B cell (primary cell): ENCODE measurements at regions of chr16 and their contacts with region 1.

Region 1: GRCh38 chr16:27367461-27368357 is 34.3 kb upstream of the IL21R start:
- DNase-seq: peak; percentile 95
- ATAC-seq: peak; percentile 77
- H3K4me3 ChIP-seq: peak overlapping the region; percentile 11 to 42 (median 30)
- H3K4me3 Mint-ChIP-seq: peak overlapping the region; percentile 78
- H3K27ac ChIP-seq: peak overlapping the region; percentile 97
- H3K27ac Mint-ChIP-seq: peak overlapping the region; percentile 96
- H3K4me1 ChIP-seq: peaks cover 36 to 57% of the 10 kb centered on the region in 2 donors
- H3K4me1 Mint-ChIP-seq: peaks cover 57% of the 10 kb centered on the region
- H3K27me3 ChIP-seq: no peaks in the 10 kb centered on the region
- H3K27me3 Mint-ChIP-seq: no peaks in the 10 kb centered on the region
- CTCF ChIP-seq: peak; percentile 85

Region 2: GRCh38 chr16:27109666-27110523 is 257.8 kb before region 1 on chr16:
- CTCF ChIA-PET with region 1: interaction called, 3 read pairs
- POLR2A ChIA-PET with region 1: no interaction called
- intact Hi-C with region 1: loop called (anchors 1 kb)
- DNase-seq: peak; percentile 80
- ATAC-seq: peak; percentile 73
- H3K4me3 ChIP-seq: peak overlapping the region in 4 of 5 experiments; percentile 24 to 64 (median 45)
- H3K4me3 Mint-ChIP-seq: peak overlapping the region; percentile 75
- H3K27ac ChIP-seq: no peak overlapping the region
- H3K27ac Mint-ChIP-seq: no peak overlapping the region
- H3K4me1 ChIP-seq: peaks cover 36 to 51% of the 10 kb centered on the region in 2 donors
- H3K4me1 Mint-ChIP-seq: peaks cover 41% of the 10 kb centered on the region
- H3K27me3 ChIP-seq: no peaks in the 10 kb centered on the region
- H3K27me3 Mint-ChIP-seq: no peaks in the 10 kb centered on the region
- CTCF ChIP-seq: peak; percentile 99

Region 3: GRCh38 chr16:27203429-27204231 is 164.1 kb before region 1 on chr16 and contains the start of gene KDM8:
- CTCF ChIA-PET with region 1: interaction called, 12 read pairs
- POLR2A ChIA-PET with region 1: interaction called, 6 read pairs
- intact Hi-C with region 1: loop called (anchors 1 kb)
- DNase-seq: peak; percentile 100
- ATAC-seq: peak; percentile 76
- H3K4me3 ChIP-seq: peak within 1 kb of the TSS; percentile 69 to 95 (median 92)
- H3K4me3 Mint-ChIP-seq: peak within 1 kb of the TSS; percentile 97
- H3K27ac ChIP-seq: peak within 1 kb of the TSS; percentile 93 to 94
- H3K27ac Mint-ChIP-seq: peak within 1 kb of the TSS; percentile 100
- H3K4me1 ChIP-seq: peaks cover 50 to 62% of the 10 kb centered on the region in 2 donors
- H3K4me1 Mint-ChIP-seq: peaks cover 67% of the 10 kb centered on the region
- H3K27me3 ChIP-seq: no peaks in the 10 kb centered on the region
- H3K27me3 Mint-ChIP-seq: no peaks in the 10 kb centered on the region
- CTCF ChIP-seq: no peak
- total RNA-seq, gene KDM8: 37.4 and 39.8 TPM in 2 replicates

Region 4: GRCh38 chr16:27304881-27305745 is 62.6 kb before region 1 on chr16:
- CTCF ChIA-PET with region 1: no interaction called
- POLR2A ChIA-PET with region 1: no interaction called
- intact Hi-C with region 1: no loop called
- DNase-seq: no peak
- ATAC-seq: no peak
- H3K4me3 ChIP-seq: no peak overlapping the region
- H3K4me3 Mint-ChIP-seq: no peak overlapping the region
- H3K27ac ChIP-seq: peak overlapping the region in 1 of 2 donors; percentile 74
- H3K27ac Mint-ChIP-seq: peak overlapping the region; percentile 61
- H3K4me1 ChIP-seq: peaks cover 53 to 58% of the 10 kb centered on the region in 2 donors
- H3K4me1 Mint-ChIP-seq: peaks cover 56% of the 10 kb centered on the region
- H3K27me3 ChIP-seq: no peaks in the 10 kb centered on the region
- H3K27me3 Mint-ChIP-seq: no peaks in the 10 kb centered on the region
- CTCF ChIP-seq: no peak

Region 5: GRCh38 chr16:27318392-27319226 is 49.1 kb before region 1 on chr16:
- CTCF ChIA-PET with region 1: interaction called, 20 read pairs
- POLR2A ChIA-PET with region 1: no interaction called
- intact Hi-C with region 1: loop called (anchors 2 kb)
- DNase-seq: peak; percentile 39
- ATAC-seq: peak; percentile 52
- H3K4me3 ChIP-seq: peak overlapping the region; percentile 40 to 98 (median 93)
- H3K4me3 Mint-ChIP-seq: peak overlapping the region; percentile 98
- H3K27ac ChIP-seq: peak overlapping the region; percentile 28 to 69
- H3K27ac Mint-ChIP-seq: peak overlapping the region; percentile 88
- H3K4me1 ChIP-seq: peaks cover 68 to 84% of the 10 kb centered on the region in 2 donors
- H3K4me1 Mint-ChIP-seq: peaks cover 80% of the 10 kb centered on the region
- H3K27me3 ChIP-seq: no peaks in the 10 kb centered on the region
- H3K27me3 Mint-ChIP-seq: no peaks in the 10 kb centered on the region
- CTCF ChIP-seq: no peak

Region 6: GRCh38 chr16:27387724-27388123 is 20.0 kb after region 1 on chr16:
- CTCF ChIA-PET with region 1: interaction called, 15 read pairs
- POLR2A ChIA-PET with region 1: no interaction called
- intact Hi-C with region 1: no loop called
- DNase-seq: no peak
- ATAC-seq: no peak
- H3K4me3 ChIP-seq: no peak overlapping the region
- H3K4me3 Mint-ChIP-seq: no peak overlapping the region
- H3K27ac ChIP-seq: no peak overlapping the region
- H3K27ac Mint-ChIP-seq: no peak overlapping the region
- H3K4me1 ChIP-seq: peaks cover 27 to 45% of the 10 kb centered on the region in 2 donors
- H3K4me1 Mint-ChIP-seq: peaks cover 27% of the 10 kb centered on the region
- H3K27me3 ChIP-seq: peaks cover 0 to 3% (median 0%) of the 10 kb centered on the region in 4 experiments
- H3K27me3 Mint-ChIP-seq: no peaks in the 10 kb centered on the region
- CTCF ChIP-seq: no peak

Region 7: DNA sequence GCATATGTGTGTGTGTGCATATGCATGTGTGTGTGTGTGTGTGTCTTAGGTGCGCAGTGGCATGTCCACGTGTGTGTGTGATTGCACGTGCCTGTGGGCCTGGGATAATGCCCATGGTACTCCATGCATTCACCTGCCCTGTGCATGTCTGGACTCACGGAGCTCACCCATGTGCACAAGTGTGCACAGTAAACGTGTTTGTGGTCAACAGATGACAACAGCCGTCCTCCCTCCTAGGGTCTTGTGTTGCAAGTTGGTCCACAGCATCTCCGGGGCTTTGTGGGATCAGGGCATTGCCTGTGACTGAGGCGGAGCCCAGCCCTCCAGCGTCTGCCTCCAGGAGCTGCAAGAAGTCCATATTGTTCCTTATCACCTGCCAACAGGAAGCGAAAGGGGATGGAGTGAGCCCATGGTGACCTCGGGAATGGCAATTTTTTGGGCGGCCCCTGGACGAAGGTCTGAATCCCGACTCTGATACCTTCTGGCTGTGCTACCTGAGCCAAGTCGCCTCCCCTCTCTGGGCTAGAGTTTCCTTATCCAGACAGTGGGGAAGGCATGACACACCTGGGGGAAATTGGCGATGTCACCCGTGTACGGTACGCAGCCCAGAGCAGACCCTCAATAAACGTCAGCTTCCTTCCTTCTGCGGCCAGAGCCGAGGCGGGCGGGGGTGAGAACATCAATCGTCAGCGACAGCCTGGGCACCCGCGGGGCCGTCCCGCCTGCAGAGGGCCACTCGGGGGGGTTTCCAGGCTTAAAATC is 81.9 kb after region 1 on chr16:
- CTCF ChIA-PET with region 1: interaction called, 29 read pairs
- POLR2A ChIA-PET with region 1: interaction called, 16 read pairs
- intact Hi-C with region 1: loop called (anchors 2 kb)
- DNase-seq: peak; percentile 93
- ATAC-seq: peak; percentile 77
- H3K4me3 ChIP-seq: peak overlapping the region in 1 of 5 experiments; percentile 17
- H3K4me3 Mint-ChIP-seq: peak overlapping the region; percentile 91
- H3K27ac ChIP-seq: peak overlapping the region; percentile 79 to 82
- H3K27ac Mint-ChIP-seq: peak overlapping the region; percentile 98
- H3K4me1 ChIP-seq: peaks cover 56 to 76% of the 10 kb centered on the region in 2 donors
- H3K4me1 Mint-ChIP-seq: peaks cover 76% of the 10 kb centered on the region
- H3K27me3 ChIP-seq: no peaks in the 10 kb centered on the region
- H3K27me3 Mint-ChIP-seq: no peaks in the 10 kb centered on the region
- CTCF ChIP-seq: no peak